T-cell (primary cell): ENCODE measurements at regions of chr2 and their contacts with region 1.

Region 1: DNA sequence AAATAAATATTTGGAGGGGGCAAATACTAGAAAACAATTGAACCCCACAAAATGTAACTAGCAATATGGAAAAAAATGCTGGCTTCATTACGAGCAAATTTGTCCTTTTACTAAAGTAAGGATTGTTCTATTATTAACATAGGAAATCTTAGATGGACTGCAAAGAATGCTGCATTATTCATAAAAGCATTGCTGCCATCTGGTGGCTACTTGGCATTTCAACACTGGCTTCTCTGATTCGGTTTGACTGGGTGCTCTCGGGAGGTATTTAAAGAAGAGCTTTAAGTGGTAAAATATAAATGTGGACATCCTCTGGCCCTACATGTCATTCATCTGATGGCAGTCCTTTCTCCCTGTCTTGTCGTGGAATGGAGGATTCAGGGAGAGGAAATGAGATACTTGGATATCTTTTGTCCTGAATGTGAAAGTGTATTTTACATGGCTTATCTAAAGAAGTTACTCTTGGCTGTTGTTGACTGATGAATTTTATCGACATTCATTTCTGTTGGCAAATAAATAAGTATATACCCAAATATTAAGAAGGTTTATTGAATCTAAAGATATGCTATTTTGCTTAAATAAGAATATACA is 130.2 kb downstream of the ARHGAP15 start:
- DNase-seq: peak; percentile 39 to 90 (median 64)
- ATAC-seq: peak; percentile 22 to 52 (median 30)
- H3K4me3 ChIP-seq: no peak overlapping the region
- H3K4me3 Mint-ChIP-seq: peak overlapping the region; percentile 58 to 71 (median 62)
- H3K27ac ChIP-seq: peak overlapping the region; percentile 72
- H3K27ac Mint-ChIP-seq: peak overlapping the region; percentile 90 to 91
- H3K4me1 ChIP-seq: peaks cover 41 to 62% of the 10 kb centered on the region in 2 experiments
- H3K4me1 Mint-ChIP-seq: peaks cover 81 to 82% (median 81%) of the 10 kb centered on the region in 3 donors
- H3K27me3 ChIP-seq: no peaks in the 10 kb centered on the region
- H3K27me3 Mint-ChIP-seq: no peaks in the 10 kb centered on the region

Region 2: DNA sequence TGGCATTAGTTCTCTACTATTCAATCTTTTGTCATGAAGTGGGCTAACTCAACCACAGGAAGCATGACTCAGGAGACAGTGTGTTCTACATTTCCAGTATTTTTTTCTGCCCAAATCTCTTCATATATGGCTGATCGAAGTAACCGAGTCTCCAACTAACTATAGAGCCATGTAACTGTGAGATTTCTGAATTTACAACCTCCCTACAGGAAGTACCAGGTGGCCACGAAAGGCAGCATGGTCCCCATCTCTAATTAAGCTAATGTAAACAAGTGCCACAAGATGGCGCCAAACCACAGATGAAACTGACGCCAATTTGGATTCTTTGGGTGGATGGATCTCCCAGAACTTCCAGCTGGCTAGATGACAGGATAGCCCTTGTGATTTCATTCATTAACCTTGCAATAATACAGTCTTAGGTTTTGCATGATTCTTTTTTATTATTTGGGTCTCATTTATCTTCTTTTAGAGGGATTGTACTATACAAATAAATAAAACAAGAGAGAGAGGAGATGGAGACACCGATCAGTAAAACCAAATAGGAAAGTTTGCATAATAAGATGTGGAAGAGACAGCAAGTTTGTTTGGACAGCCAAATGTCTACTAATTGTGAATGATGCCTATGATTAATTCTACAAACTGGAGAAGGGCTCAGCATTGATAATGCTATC is 148.6 kb before region 1 on chr2:
- CTCF ChIA-PET with region 1: interaction called, 10 to 69 read pairs
- POLR2A ChIA-PET with region 1: interaction called in 1 of 2 experiments, 10 read pairs
- DNase-seq: peak; percentile 13 to 89 (median 56)
- ATAC-seq: peak; percentile 78 to 87 (median 83)
- H3K4me3 ChIP-seq: no peak overlapping the region
- H3K4me3 Mint-ChIP-seq: peak overlapping the region; percentile 9 to 49 (median 20)
- H3K27ac ChIP-seq: peak overlapping the region; percentile 31
- H3K27ac Mint-ChIP-seq: peak overlapping the region; percentile 85 to 91
- H3K4me1 ChIP-seq: peaks cover 6 to 10% of the 10 kb centered on the region in 2 experiments
- H3K4me1 Mint-ChIP-seq: peaks cover 28 to 31% (median 29%) of the 10 kb centered on the region in 3 donors
- H3K27me3 ChIP-seq: no peaks in the 10 kb centered on the region
- H3K27me3 Mint-ChIP-seq: peaks cover 0 to 2% of the 10 kb centered on the region in 2 donors

Region 3: DNA sequence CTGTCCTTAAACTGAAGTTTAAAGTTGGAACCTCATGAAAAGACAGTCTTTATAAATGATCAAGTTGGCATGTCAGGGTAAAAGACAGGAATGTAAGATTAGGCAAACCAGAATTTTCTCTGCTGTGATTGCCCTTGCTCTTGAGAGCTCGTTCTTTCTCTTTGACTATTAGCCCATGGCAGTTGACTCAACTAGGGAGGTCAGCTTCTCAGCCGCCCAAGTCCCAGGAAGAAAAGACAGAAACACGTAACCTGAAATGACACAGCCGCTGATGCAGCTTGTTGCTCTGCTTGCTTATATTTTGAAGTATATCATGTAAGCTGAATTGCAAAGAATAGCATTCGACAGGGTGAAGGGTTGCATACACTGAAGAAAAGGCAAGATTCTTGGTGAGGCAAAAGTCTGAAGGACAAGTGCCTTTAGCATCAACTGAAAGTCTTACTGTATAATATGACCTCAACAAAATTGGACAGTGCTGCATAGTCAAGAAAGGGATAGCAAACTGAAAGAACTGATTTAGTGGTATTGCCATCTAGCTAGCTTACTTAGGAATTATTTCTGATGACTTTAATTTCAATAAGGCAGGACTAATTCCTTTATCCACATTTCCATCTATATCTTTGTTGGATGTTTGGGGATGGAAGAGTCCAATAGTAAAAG is 75.5 kb before region 1 on chr2:
- CTCF ChIA-PET with region 1: interaction called, 4 read pairs
- POLR2A ChIA-PET with region 1: interaction called in 1 of 2 experiments, 10 read pairs
- DNase-seq: no peak
- ATAC-seq: no peak
- H3K4me3 ChIP-seq: no peak overlapping the region
- H3K4me3 Mint-ChIP-seq: no peak overlapping the region
- H3K27ac ChIP-seq: no peak overlapping the region
- H3K27ac Mint-ChIP-seq: peak overlapping the region in 1 of 2 donors; percentile 68
- H3K4me1 ChIP-seq: peaks cover 5 to 10% of the 10 kb centered on the region in 2 experiments
- H3K4me1 Mint-ChIP-seq: peaks cover 64 to 73% (median 70%) of the 10 kb centered on the region in 3 donors
- H3K27me3 ChIP-seq: no peaks in the 10 kb centered on the region
- H3K27me3 Mint-ChIP-seq: no peaks in the 10 kb centered on the region

Region 4: GRCh38 chr2:143217512-143218115 is 41.8 kb before region 1 on chr2:
- CTCF ChIA-PET with region 1: interaction called, 7 to 25 read pairs
- POLR2A ChIA-PET with region 1: interaction called in 1 of 2 experiments, 3 read pairs
- DNase-seq: no peak
- ATAC-seq: peak in 2 of 4 experiments; percentile 16 to 17
- H3K4me3 ChIP-seq: no peak overlapping the region
- H3K4me3 Mint-ChIP-seq: no peak overlapping the region
- H3K27ac ChIP-seq: no peak overlapping the region
- H3K27ac Mint-ChIP-seq: peak overlapping the region; percentile 84 to 89
- H3K4me1 ChIP-seq: peaks cover 0 to 4% of the 10 kb centered on the region in 2 experiments
- H3K4me1 Mint-ChIP-seq: peaks cover 61 to 68% (median 66%) of the 10 kb centered on the region in 3 donors
- H3K27me3 ChIP-seq: no peaks in the 10 kb centered on the region
- H3K27me3 Mint-ChIP-seq: no peaks in the 10 kb centered on the region

Region 5: GRCh38 chr2:143246815-143247744 is 12.4 kb before region 1 on chr2:
- CTCF ChIA-PET with region 1: interaction called, 4 to 37 read pairs
- POLR2A ChIA-PET with region 1: interaction called in 1 of 2 experiments, 7 read pairs
- DNase-seq: peak in 19 of 35 experiments; percentile 4 to 47 (median 22)
- ATAC-seq: peak; percentile 79 to 92 (median 84)
- H3K4me3 ChIP-seq: peak overlapping the region in 1 of 2 donors; percentile 41
- H3K4me3 Mint-ChIP-seq: no peak overlapping the region
- H3K27ac ChIP-seq: peak overlapping the region; percentile 47
- H3K27ac Mint-ChIP-seq: no peak overlapping the region
- H3K4me1 ChIP-seq: peaks cover 19 to 22% of the 10 kb centered on the region in 2 experiments
- H3K4me1 Mint-ChIP-seq: peaks cover 23 to 38% (median 34%) of the 10 kb centered on the region in 3 donors
- H3K27me3 ChIP-seq: no peaks in the 10 kb centered on the region
- H3K27me3 Mint-ChIP-seq: no peaks in the 10 kb centered on the region

Region 6: DNA sequence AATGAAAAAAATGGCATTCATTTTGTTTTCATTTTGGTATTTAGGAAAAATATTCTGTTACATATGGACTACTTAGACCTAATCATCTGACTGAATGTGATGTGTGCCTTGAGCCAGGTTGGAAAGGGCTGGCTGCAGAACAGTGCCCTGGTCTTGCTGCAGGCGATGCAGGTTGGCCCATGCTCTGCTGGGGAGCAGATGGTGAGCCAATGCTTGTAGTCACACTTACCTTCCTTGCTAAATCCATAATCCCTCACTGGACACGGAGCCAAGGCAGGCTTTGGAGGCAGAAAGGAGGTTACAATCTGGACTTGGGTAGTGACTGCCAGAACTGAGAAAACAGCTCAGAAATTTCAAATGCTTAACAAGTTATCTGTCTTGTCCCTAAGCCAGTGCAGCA is 98.5 kb after region 1 on chr2:
- CTCF ChIA-PET with region 1: no interaction called
- POLR2A ChIA-PET with region 1: no interaction called
- DNase-seq: no peak
- ATAC-seq: no peak
- H3K4me3 ChIP-seq: no peak overlapping the region
- H3K4me3 Mint-ChIP-seq: no peak overlapping the region
- H3K27ac ChIP-seq: no peak overlapping the region
- H3K27ac Mint-ChIP-seq: no peak overlapping the region
- H3K4me1 ChIP-seq: no peaks in the 10 kb centered on the region
- H3K4me1 Mint-ChIP-seq: peaks cover 50 to 52% (median 51%) of the 10 kb centered on the region in 3 donors
- H3K27me3 ChIP-seq: no peaks in the 10 kb centered on the region
- H3K27me3 Mint-ChIP-seq: no peaks in the 10 kb centered on the region